Sigmoid colon (tissue), 7 donors: ENCODE measurements at regions of chr9 and their contacts with region 1.

Region 1: GRCh38 chr9:124126571-124127289 is 115.2 kb downstream of the LHX2 start:
- DNase-seq: peak; percentile 84
- H3K4me3 ChIP-seq: no peak overlapping the region
- H3K27ac ChIP-seq: no peak overlapping the region
- H3K4me1 ChIP-seq: no peaks in the 10 kb centered on the region
- H3K27me3 ChIP-seq: peaks cover 0 to 8% (median 0%) of the 10 kb centered on the region in 3 donors
- CTCF ChIP-seq: peak; percentile 92 to 99 (median 95)
- EP300 ChIP-seq: no peak
- POLR2A ChIP-seq: no peak

Region 2: DNA sequence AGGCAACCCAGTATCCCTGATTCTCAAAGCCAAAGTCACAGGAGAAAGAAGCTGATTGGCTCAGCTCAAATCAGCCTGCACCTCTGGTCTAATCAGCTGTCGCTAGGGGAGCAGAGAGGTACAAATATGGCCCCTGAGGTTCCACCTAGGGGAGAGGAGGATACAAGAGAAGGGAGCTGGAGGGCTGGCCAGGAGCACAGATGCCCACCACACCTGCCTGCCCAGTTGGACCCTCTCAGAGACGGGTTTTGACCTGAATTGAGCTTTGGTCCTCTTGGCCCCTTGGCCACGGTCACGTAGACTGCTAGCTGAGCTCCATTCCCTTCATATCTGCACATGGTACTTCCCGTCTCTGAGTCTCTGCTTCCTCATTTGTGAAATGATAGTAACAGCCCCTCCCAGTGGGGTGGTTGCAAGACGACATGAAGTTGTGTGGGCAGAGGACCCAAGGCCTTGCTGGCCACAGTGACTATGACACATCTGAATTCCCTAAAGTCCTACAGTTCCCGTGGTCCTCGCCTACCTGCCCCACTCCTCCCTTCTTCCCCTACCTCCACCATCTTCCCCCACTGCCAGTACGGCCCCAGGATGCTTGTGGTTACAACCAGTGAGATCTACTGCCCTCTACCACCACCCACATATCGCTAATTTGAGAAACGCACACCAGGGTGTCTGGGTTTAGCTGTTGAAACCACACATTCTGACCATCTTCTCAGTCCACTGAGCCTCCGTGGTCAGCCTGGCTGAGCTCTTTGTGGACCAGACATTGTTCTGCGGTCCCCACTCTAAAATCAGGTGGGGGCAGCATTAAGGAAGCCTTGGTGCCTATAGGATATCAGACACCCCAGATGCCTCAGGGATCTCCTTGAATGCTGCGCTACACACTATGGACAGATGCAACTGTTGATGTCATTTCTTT is 70.7 kb after region 1 on chr9:
- intact Hi-C with region 1: no loop called
- DNase-seq: peak; percentile 59
- H3K4me3 ChIP-seq: no peak overlapping the region
- H3K27ac ChIP-seq: no peak overlapping the region
- H3K4me1 ChIP-seq: no peaks in the 10 kb centered on the region
- H3K27me3 ChIP-seq: no peaks in the 10 kb centered on the region
- CTCF ChIP-seq: no peak
- EP300 ChIP-seq: no peak
- POLR2A ChIP-seq: no peak

Region 3: GRCh38 chr9:124291801-124292396 is 165.2 kb after region 1 on chr9:
- intact Hi-C with region 1: loop called (anchors 10 kb)
- DNase-seq: no peak
- H3K4me3 ChIP-seq: no peak overlapping the region
- H3K27ac ChIP-seq: peak overlapping the region; percentile 32 to 71 (median 53)
- H3K4me1 ChIP-seq: peaks cover 0 to 91% (median 78%) of the 10 kb centered on the region in 4 donors
- H3K27me3 ChIP-seq: no peaks in the 10 kb centered on the region
- CTCF ChIP-seq: no peak
- EP300 ChIP-seq: no peak
- POLR2A ChIP-seq: no peak

Region 4: GRCh38 chr9:124320062-124320973 is 193.6 kb after region 1 on chr9:
- intact Hi-C with region 1: loop called (anchors 1 kb)
- DNase-seq: peak; percentile 81
- H3K4me3 ChIP-seq: no peak overlapping the region
- H3K27ac ChIP-seq: peak overlapping the region in 1 of 4 donors; percentile 7
- H3K4me1 ChIP-seq: peaks cover 0 to 10% (median 7%) of the 10 kb centered on the region in 4 donors
- H3K27me3 ChIP-seq: no peaks in the 10 kb centered on the region
- CTCF ChIP-seq: peak; percentile 74 to 86 (median 78)
- EP300 ChIP-seq: no peak
- POLR2A ChIP-seq: no peak

Region 5: DNA sequence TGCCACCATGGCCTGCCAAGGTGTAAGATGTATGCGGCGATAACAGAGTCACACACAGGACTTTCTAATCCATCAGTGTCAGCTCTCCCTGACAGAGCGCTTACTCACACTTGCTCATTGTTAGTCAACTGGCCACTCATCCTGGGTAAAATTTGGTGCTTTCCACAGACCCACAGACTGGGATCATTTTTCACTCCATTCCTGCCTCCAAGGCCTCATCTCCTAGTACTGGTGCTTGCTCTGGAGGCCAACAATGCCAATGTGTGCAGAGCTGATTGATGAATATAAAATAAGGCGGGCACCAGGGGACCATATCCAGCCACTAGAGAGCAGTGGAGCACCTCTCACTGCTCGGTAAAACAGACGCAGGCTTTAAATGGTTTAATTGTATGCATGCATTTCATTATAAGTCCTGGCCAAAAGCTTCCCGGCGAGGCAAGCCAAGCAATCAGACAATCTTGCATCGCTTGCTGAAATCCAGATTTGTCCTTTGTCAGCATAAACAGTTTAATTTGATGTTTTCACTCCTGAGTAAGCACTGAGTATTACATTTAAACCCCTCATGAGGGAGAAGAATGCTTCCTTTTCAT is 266.2 kb after region 1 on chr9:
- intact Hi-C with region 1: loop called (anchors 10 kb)
- DNase-seq: no peak
- H3K4me3 ChIP-seq: no peak overlapping the region
- H3K27ac ChIP-seq: no peak overlapping the region
- H3K4me1 ChIP-seq: peaks cover 0 to 58% (median 37%) of the 10 kb centered on the region in 4 donors
- H3K27me3 ChIP-seq: no peaks in the 10 kb centered on the region
- CTCF ChIP-seq: no peak
- EP300 ChIP-seq: no peak
- POLR2A ChIP-seq: no peak

Region 6: GRCh38 chr9:124532897-124533296 is 406.2 kb after region 1 on chr9:
- intact Hi-C with region 1: loop called (anchors 10 kb)
- DNase-seq: no peak
- H3K4me3 ChIP-seq: no peak overlapping the region
- H3K27ac ChIP-seq: no peak overlapping the region
- H3K4me1 ChIP-seq: no peaks in the 10 kb centered on the region
- H3K27me3 ChIP-seq: no peaks in the 10 kb centered on the region
- CTCF ChIP-seq: no peak
- EP300 ChIP-seq: no peak
- POLR2A ChIP-seq: no peak